ENCODE measurements at regions of chr6 and their contacts with region 1.

Region 1: DNA sequence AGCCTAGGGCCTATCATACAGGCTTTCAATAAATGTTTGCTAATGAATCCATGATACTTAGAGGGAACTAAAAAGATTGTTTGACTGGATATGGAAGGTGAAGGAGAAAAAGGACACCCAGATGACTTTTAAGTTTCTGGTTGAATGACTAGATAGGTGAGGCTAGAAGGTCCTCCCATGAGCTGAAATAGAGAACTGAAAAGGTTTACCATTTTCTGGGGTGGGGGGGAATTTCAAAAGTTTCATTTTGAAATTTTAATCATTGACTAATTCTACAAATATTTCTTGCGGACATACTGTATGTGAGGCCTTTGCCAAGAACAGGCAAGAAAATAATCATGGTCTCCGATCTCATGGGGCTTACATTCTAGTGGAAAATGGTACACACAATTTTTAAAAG is 17.9 kb upstream of the ZBTB2 start:
- DNase-seq: no peak
- ATAC-seq: no peak
- H3K4me3 Mint-ChIP-seq: no peak overlapping the region
- H3K27ac Mint-ChIP-seq: peak overlapping the region; percentile 40
- H3K4me1 Mint-ChIP-seq: peaks cover 19% of the 10 kb centered on the region
- H3K27me3 Mint-ChIP-seq: no peaks in the 10 kb centered on the region
- CTCF ChIP-seq: no peak

Region 2: DNA sequence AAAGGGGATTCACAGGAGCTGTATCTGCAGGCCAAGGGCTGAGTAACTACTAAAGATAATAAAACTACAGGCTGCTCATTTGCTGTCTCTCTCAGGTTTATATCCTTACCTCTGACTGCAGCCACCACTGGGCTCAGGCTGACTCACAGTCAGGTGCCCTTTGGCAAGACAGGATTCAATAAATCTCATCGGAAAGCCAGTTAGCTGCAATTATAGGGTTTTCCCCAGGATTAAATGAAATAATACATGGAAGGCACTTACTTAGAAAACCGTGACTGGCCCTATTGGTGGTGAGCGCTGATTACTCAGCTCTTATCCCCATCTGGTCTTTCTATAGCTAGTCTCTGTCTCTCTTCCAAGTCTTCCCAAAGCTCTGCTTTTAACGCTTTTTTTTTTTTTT is 16.3 kb after region 1 on chr6:
- CTCF ChIA-PET with region 1: interaction called, 11 read pairs
- POLR2A ChIA-PET with region 1: interaction called, 3 read pairs
- intact Hi-C with region 1: no loop called
- DNase-seq: no peak
- ATAC-seq: no peak
- H3K4me3 Mint-ChIP-seq: no peak overlapping the region
- H3K27ac Mint-ChIP-seq: no peak overlapping the region
- H3K4me1 Mint-ChIP-seq: no peaks in the 10 kb centered on the region
- H3K27me3 Mint-ChIP-seq: no peaks in the 10 kb centered on the region
- CTCF ChIP-seq: no peak